ENCODE measurements at regions of chr6 and their contacts with region 1.

Region 1: GRCh38 chr6:156801712-156802111 is 24.5 kb downstream of the ARID1B start:
- DNase-seq: no peak
- ATAC-seq: no peak
- H3K4me3 ChIP-seq: no peak overlapping the region
- H3K4me3 Mint-ChIP-seq: no peak overlapping the region
- H3K27ac ChIP-seq: no peak overlapping the region
- H3K27ac Mint-ChIP-seq: peak overlapping the region; percentile 24
- H3K4me1 ChIP-seq: peaks cover 41% of the 10 kb centered on the region
- H3K4me1 Mint-ChIP-seq: peaks cover 78% of the 10 kb centered on the region
- H3K27me3 ChIP-seq: no peaks in the 10 kb centered on the region
- H3K27me3 Mint-ChIP-seq: no peaks in the 10 kb centered on the region
- CTCF ChIP-seq: no peak

Region 2: DNA sequence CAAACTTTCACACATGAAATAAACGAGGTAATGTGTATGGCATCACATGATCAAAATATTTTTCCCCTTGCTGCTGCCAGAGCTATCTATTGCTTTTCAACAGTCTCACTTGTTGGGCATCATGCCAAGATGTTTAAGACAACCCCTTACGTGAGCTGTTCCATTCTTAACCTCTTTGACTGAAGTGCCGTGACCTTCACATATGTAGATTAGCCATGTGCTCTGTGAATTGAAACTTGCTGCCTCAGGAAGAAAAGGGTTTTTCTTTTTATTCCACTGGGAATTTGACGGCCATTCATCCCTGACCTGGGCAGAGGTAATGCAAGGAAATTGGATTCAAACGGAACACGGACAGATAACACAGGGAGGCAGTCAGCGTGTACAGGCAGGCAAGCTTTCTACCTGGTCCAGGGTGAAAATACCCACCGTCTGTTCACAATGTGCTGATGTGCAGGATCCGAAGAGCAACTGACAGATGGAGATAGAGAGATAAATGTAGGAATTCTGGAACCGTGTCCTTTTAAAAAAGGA is 10.3 kb before region 1 on chr6:
- CTCF ChIA-PET with region 1: interaction called, 4 read pairs
- POLR2A ChIA-PET with region 1: interaction called, 4 read pairs
- intact Hi-C with region 1: loop called in 1 of 2 experiments (anchors 2 kb)
- DNase-seq: peak in 4 of 9 experiments; percentile 29 to 84 (median 50)
- ATAC-seq: peak; percentile 94
- H3K4me3 ChIP-seq: no peak overlapping the region
- H3K4me3 Mint-ChIP-seq: peak overlapping the region; percentile 23
- H3K27ac ChIP-seq: no peak overlapping the region
- H3K27ac Mint-ChIP-seq: peak overlapping the region; percentile 22
- H3K4me1 ChIP-seq: peaks cover 72% of the 10 kb centered on the region
- H3K4me1 Mint-ChIP-seq: peaks cover 93% of the 10 kb centered on the region
- H3K27me3 ChIP-seq: no peaks in the 10 kb centered on the region
- H3K27me3 Mint-ChIP-seq: no peaks in the 10 kb centered on the region
- CTCF ChIP-seq: no peak